ENCODE measurements at regions of chr20 and their contacts with region 1.

Region 1: DNA sequence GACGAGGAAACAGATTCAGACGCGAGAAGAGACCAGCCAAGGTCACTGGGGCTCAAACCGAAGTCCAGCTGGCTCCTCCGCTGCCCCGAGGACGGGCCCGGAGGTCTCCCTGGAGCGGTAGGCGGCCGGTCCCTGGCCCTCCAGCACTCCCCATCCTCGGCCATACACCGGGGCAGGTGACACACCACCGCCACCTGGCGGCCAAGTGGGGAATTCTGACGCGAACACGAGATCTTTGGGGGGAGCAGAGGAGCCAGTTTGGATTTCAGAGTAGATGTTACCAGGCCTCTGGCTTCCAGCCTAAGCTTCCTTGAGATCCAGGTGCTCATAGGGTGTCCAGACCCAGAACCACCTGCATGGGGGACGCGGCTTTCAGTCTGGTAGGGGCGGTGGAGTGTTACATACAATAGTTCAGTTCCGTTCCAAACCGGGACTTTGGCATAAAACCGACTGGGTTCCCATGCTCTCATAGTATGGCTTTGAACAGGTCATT is 16.1 kb downstream of the BPIFB1 start:
- DNase-seq: peak; percentile 82 to 90 (median 86)
- ATAC-seq: peak; percentile 98
- H3K4me3 ChIP-seq: no peak overlapping the region
- H3K27ac ChIP-seq: no peak overlapping the region
- H3K4me1 ChIP-seq: peaks cover 0 to 3% of the 10 kb centered on the region in 2 experiments; a peak in 1 of 5 replicates
- H3K27me3 ChIP-seq: peaks cover 12 to 46% of the 10 kb centered on the region in 2 experiments
- CTCF ChIP-seq: peak; percentile 89 to 97 (median 93)
- EP300 ChIP-seq: no peak
- POLR2A ChIP-seq: no peak
- RAD21 ChIP-seq: peak; percentile 52 to 83; a peak in 3 of 4 replicates

Region 2: GRCh38 chr20:33172781-33173180 is 126.4 kb before region 1 on chr20:
- CTCF ChIA-PET with region 1: no interaction called
- POLR2A ChIA-PET with region 1: no interaction called
- in situ Hi-C with region 1: no loop called
- intact Hi-C with region 1: loop called (anchors 5 kb)
- DNase-seq: no peak
- ATAC-seq: no peak
- H3K4me3 ChIP-seq: no peak overlapping the region
- H3K27ac ChIP-seq: no peak overlapping the region
- H3K4me1 ChIP-seq: no peaks in the 10 kb centered on the region
- H3K27me3 ChIP-seq: peaks cover 4 to 21% of the 10 kb centered on the region in 2 experiments; a peak in 3 of 5 replicates
- CTCF ChIP-seq: no peak
- EP300 ChIP-seq: no peak
- POLR2A ChIP-seq: no peak
- RAD21 ChIP-seq: no peak

Region 3: DNA sequence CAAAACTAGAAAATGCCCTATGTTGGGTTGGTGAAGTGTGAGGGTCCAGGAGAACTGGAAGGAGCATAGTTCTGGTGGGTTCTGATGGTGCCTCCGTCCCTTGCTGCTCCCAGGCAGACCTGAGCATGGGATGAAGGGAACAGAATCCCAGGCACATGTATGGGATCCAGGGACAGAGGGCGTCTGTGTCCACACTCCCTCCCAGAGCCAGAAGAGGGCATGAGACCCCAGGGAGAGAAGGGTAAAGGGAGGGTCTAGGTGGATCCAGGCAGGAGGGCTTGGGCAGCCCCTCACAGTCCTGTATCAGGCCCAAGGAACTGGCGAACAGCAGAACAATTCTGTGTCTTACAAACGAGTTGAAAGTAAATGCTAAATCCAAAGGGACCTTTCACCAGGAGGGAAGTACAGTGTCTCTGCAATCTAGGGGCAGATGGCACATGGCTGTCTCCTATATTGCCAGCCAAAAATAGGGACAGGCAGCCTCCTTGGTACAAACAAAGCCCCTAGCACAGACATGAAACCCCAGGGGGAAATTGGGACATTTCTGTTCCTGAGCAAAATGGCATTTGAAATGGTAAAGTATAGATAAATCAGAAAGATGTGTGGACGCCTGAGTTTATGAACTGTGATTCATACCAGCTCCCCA is 65.9 kb before region 1 on chr20:
- CTCF ChIA-PET with region 1: no interaction called
- POLR2A ChIA-PET with region 1: no interaction called
- in situ Hi-C with region 1: no loop called
- intact Hi-C with region 1: loop called (anchors 10 kb)
- DNase-seq: peak in 1 of 4 experiments; percentile 15
- ATAC-seq: 0 out of 3 replicates have a peak, but pooled peaks have one; percentile 49
- H3K4me3 ChIP-seq: no peak overlapping the region
- H3K27ac ChIP-seq: no peak overlapping the region
- H3K4me1 ChIP-seq: no peaks in the 10 kb centered on the region
- H3K27me3 ChIP-seq: peaks cover 2 to 9% of the 10 kb centered on the region in 2 experiments; a peak in 1 of 5 replicates
- CTCF ChIP-seq: peak; percentile 31 to 39 (median 38); a peak in 3 of 6 replicates
- EP300 ChIP-seq: no peak
- POLR2A ChIP-seq: no peak
- RAD21 ChIP-seq: peak; percentile 22 to 53; a peak in 3 of 4 replicates

Region 4: DNA sequence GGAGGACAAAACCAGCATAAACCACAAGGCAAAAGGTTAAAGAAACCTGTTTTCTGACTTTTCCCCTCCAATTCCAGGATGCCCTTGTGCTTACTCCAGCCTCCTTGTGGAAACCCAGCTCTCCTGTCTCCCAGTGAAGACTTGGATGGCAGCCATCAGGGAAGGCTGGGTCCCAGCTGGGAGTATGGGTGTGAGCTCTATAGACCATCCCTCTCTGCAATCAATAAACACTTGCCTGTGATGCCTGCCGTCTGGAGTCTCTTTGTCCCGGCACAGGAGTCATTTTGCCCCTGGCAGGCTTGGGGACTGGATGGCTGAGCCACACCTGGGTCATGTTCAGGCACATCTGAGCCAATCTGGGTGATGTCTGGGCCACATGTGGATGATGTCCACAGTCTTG is 10.5 kb after region 1 on chr20:
- CTCF ChIA-PET with region 1: no interaction called
- POLR2A ChIA-PET with region 1: no interaction called
- in situ Hi-C with region 1: no loop called
- intact Hi-C with region 1: no loop called
- DNase-seq: no peak
- ATAC-seq: no peak
- H3K4me3 ChIP-seq: no peak overlapping the region
- H3K27ac ChIP-seq: no peak overlapping the region
- H3K4me1 ChIP-seq: no peaks in the 10 kb centered on the region
- H3K27me3 ChIP-seq: peaks cover 9 to 31% of the 10 kb centered on the region in 2 experiments; a peak in 3 of 5 replicates
- CTCF ChIP-seq: no peak
- EP300 ChIP-seq: no peak
- POLR2A ChIP-seq: no peak
- RAD21 ChIP-seq: no peak

Region 5: GRCh38 chr20:33627577-33628216 is 328.5 kb after region 1 on chr20:
- CTCF ChIA-PET with region 1: no interaction called
- POLR2A ChIA-PET with region 1: no interaction called
- in situ Hi-C with region 1: no loop called
- intact Hi-C with region 1: no loop called
- DNase-seq: no peak
- ATAC-seq: no peak
- H3K4me3 ChIP-seq: no peak overlapping the region
- H3K27ac ChIP-seq: no peak overlapping the region
- H3K4me1 ChIP-seq: peaks cover 5 to 10% of the 10 kb centered on the region in 2 experiments; a peak in 3 of 5 replicates
- H3K27me3 ChIP-seq: no peaks in the 10 kb centered on the region
- CTCF ChIP-seq: no peak
- EP300 ChIP-seq: no peak
- POLR2A ChIP-seq: no peak
- RAD21 ChIP-seq: no peak